Activated CD4-positive, alpha-beta memory T cell treated with anti-CD3 and anti-CD28 coated beads for 36 hours (primary cell): ENCODE measurements at regions of chr6 and their contacts with region 1.

Region 1: GRCh38 chr6:26568601-26569432 is 27.9 kb upstream of the ABT1 start:
- DNase-seq: peak; percentile 99
- H3K4me3 Mint-ChIP-seq: peak overlapping the region; percentile 87
- H3K27ac Mint-ChIP-seq: peak overlapping the region; percentile 90
- H3K4me1 Mint-ChIP-seq: peaks cover 26% of the 10 kb centered on the region
- H3K27me3 Mint-ChIP-seq: peaks cover 4% of the 10 kb centered on the region

Region 2: GRCh38 chr6:26175428-26176181 is 393.2 kb before region 1 on chr6:
- CTCF ChIA-PET with region 1: no interaction called
- POLR2A ChIA-PET with region 1: no interaction called
- intact Hi-C with region 1: loop called (anchors 10 kb)
- DNase-seq: peak; percentile 63
- H3K4me3 Mint-ChIP-seq: peak overlapping the region; percentile 24
- H3K27ac Mint-ChIP-seq: peak overlapping the region; percentile 43
- H3K4me1 Mint-ChIP-seq: peaks cover 31% of the 10 kb centered on the region
- H3K27me3 Mint-ChIP-seq: no peaks in the 10 kb centered on the region

Region 3: GRCh38 chr6:26240154-26241032 is 328.4 kb before region 1 on chr6:
- CTCF ChIA-PET with region 1: no interaction called
- POLR2A ChIA-PET with region 1: no interaction called
- intact Hi-C with region 1: no loop called
- DNase-seq: peak; percentile 85
- H3K4me3 Mint-ChIP-seq: peak overlapping the region; percentile 70
- H3K27ac Mint-ChIP-seq: peak overlapping the region; percentile 91
- H3K4me1 Mint-ChIP-seq: peaks cover 20% of the 10 kb centered on the region
- H3K27me3 Mint-ChIP-seq: peaks cover 4% of the 10 kb centered on the region

Region 4: DNA sequence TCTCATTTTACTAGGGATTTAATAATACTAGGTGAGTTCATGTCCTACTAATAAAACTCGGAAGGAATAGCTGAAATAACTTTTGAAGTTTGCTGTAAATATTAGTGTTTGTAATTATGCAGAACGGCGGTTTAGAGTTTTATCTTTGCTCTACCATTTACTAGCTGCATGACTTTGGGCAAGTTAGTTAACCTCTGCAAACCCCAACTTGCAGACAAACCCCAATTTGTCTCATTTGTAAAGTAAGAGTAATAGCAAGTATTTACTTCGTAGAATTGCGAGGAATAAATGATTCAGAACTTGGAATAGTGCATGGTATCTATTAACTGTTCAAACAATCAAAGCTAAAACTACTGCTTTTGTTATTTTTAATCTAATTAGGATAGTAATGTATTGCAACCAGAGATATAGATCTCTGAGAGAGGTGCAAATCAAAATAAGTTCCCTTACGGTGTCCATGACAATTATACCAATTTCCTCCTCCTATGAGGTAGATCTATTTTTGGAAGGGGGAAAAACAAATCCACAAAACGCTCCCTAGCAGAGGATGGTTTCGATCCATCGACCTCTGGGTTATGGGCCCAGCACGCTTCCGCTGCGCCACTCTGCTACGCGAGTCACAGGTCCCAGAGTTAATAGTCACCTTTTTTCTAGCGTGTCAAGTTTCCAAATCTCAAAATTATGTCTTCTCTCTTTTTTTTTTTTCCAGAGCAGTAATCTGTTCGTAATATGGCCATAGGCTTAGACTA is 238.9 kb before region 1 on chr6:
- CTCF ChIA-PET with region 1: interaction called, 5 read pairs
- POLR2A ChIA-PET with region 1: interaction called, 4 read pairs
- intact Hi-C with region 1: loop called (anchors 1 kb)
- DNase-seq: peak; percentile 77
- H3K4me3 Mint-ChIP-seq: peak overlapping the region; percentile 80
- H3K27ac Mint-ChIP-seq: peak overlapping the region; percentile 84
- H3K4me1 Mint-ChIP-seq: peaks cover 40% of the 10 kb centered on the region
- H3K27me3 Mint-ChIP-seq: peaks cover 43% of the 10 kb centered on the region

Region 5: DNA sequence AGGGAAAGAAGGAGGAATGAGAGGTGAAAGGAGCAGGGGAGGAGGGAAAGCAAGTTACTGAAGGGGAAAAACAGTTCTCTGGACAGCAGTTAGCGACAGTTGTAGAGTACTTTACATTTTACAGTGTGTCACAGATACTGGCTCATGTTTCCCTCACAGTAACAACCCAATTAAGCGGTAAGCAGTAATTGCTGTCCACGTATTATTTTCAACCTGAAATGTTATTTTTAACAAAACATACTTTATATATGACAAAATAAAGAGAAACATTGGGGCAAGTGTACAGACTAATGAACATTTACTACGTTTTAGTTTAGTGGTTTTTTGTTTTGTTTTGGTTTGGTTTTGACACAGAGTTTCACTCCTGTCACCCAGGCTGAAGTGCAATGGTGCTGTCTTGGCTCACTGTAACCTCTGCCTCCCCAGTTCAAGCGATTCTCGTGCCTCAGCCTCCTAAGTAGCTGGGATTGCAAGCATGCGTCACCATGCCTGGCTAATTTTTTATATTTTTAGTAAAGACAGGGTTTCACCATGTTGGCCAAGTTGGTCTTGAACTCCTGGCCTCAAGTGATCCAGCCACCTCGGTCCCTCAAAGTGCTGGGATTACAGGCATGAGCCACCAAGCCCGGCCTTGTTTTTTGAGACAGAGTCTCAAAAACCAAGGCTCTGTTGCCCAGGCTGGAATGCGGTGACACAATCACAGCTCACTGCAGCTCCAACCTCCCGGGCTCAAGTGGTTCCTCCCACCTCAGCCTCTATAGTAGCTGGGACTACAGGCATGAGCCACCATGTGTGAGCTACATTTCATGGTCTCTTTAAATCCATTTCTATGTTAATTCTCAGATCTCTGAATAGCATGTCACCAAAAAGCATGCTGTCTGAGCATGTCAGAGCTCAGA is 226.5 kb before region 1 on chr6:
- CTCF ChIA-PET with region 1: interaction called, 28 read pairs
- POLR2A ChIA-PET with region 1: interaction called, 4 read pairs
- intact Hi-C with region 1: loop called (anchors 1 kb)
- DNase-seq: peak; percentile 65
- H3K4me3 Mint-ChIP-seq: peak overlapping the region; percentile 76
- H3K27ac Mint-ChIP-seq: peak overlapping the region; percentile 69
- H3K4me1 Mint-ChIP-seq: peaks cover 8% of the 10 kb centered on the region
- H3K27me3 Mint-ChIP-seq: peaks cover 5% of the 10 kb centered on the region

Region 6: DNA sequence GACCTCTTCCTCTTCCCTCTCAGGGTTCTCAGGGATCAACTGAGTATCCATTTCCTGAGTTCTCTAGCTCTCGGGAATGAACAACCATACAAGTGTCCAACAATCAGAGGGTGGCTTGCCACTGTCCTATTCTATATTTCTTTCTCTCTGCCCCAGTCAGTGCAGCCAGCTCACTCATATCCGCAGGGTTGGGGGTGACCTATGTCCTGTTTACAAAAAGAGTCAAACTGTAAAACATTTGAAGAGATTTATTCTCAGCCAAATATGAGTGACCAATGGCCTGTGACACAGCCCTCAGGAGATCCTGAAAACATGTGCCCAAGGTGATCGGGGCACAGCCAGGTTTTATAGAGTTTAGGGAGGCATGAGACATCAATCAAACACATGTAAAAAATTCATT is 214.7 kb before region 1 on chr6:
- CTCF ChIA-PET with region 1: no interaction called
- POLR2A ChIA-PET with region 1: no interaction called
- intact Hi-C with region 1: no loop called
- DNase-seq: no peak
- H3K4me3 Mint-ChIP-seq: no peak overlapping the region
- H3K27ac Mint-ChIP-seq: no peak overlapping the region
- H3K4me1 Mint-ChIP-seq: peaks cover 4% of the 10 kb centered on the region
- H3K27me3 Mint-ChIP-seq: no peaks in the 10 kb centered on the region

Region 7: GRCh38 chr6:26431258-26432172 is 137.3 kb before region 1 on chr6:
- CTCF ChIA-PET with region 1: no interaction called
- POLR2A ChIA-PET with region 1: no interaction called
- intact Hi-C with region 1: no loop called
- DNase-seq: no peak
- H3K4me3 Mint-ChIP-seq: no peak overlapping the region
- H3K27ac Mint-ChIP-seq: no peak overlapping the region
- H3K4me1 Mint-ChIP-seq: no peaks in the 10 kb centered on the region
- H3K27me3 Mint-ChIP-seq: no peaks in the 10 kb centered on the region

Region 8: GRCh38 chr6:26457806-26458688 is 110.8 kb before region 1 on chr6 and contains the start of gene BTN2A1:
- CTCF ChIA-PET with region 1: no interaction called
- POLR2A ChIA-PET with region 1: no interaction called
- intact Hi-C with region 1: no loop called
- DNase-seq: peak; percentile 79
- H3K4me3 Mint-ChIP-seq: peak within 1 kb of the TSS; percentile 98
- H3K27ac Mint-ChIP-seq: peak within 1 kb of the TSS; percentile 98
- H3K4me1 Mint-ChIP-seq: peaks cover 50% of the 10 kb centered on the region
- H3K27me3 Mint-ChIP-seq: no peaks in the 10 kb centered on the region
- total RNA-seq, gene BTN2A1: 17.6 to 19.6 TPM

Region 9: GRCh38 chr6:26520853-26521599 is 47.8 kb before region 1 on chr6:
- CTCF ChIA-PET with region 1: interaction called, 4 read pairs
- POLR2A ChIA-PET with region 1: no interaction called
- intact Hi-C with region 1: loop called (anchors 1 kb)
- DNase-seq: peak; percentile 89
- H3K4me3 Mint-ChIP-seq: peak overlapping the region; percentile 72
- H3K27ac Mint-ChIP-seq: peak overlapping the region; percentile 81
- H3K4me1 Mint-ChIP-seq: peaks cover 30% of the 10 kb centered on the region
- H3K27me3 Mint-ChIP-seq: peaks cover 1% of the 10 kb centered on the region

Region 10: GRCh38 chr6:26537846-26538571 is 30.8 kb before region 1 on chr6 and contains the start of gene HMGN4:
- CTCF ChIA-PET with region 1: interaction called, 3 read pairs
- POLR2A ChIA-PET with region 1: no interaction called
- intact Hi-C with region 1: loop called (anchors 1 kb)
- DNase-seq: peak; percentile 88
- H3K4me3 Mint-ChIP-seq: peak within 1 kb of the TSS; percentile 84
- H3K27ac Mint-ChIP-seq: peak within 1 kb of the TSS; percentile 97
- H3K4me1 Mint-ChIP-seq: peaks cover 64% of the 10 kb centered on the region
- H3K27me3 Mint-ChIP-seq: peaks cover 2% of the 10 kb centered on the region
- total RNA-seq, gene HMGN4: 93.2 to 96.0 TPM